Activated T-helper 2 cell treated with anti-CD3 and anti-CD28 coated beads, Interferon-gamma antibody, Interleukin-2, Interleukin-4, amounts not matched to agents 10 μg/mL and 5 μg/mL and 100 μg/mL, durations not matched to agents 14 hours and 24 hours and 36 hours (primary cell): ENCODE measurements at regions of chr5 and their contacts with region 1.

Region 1: DNA sequence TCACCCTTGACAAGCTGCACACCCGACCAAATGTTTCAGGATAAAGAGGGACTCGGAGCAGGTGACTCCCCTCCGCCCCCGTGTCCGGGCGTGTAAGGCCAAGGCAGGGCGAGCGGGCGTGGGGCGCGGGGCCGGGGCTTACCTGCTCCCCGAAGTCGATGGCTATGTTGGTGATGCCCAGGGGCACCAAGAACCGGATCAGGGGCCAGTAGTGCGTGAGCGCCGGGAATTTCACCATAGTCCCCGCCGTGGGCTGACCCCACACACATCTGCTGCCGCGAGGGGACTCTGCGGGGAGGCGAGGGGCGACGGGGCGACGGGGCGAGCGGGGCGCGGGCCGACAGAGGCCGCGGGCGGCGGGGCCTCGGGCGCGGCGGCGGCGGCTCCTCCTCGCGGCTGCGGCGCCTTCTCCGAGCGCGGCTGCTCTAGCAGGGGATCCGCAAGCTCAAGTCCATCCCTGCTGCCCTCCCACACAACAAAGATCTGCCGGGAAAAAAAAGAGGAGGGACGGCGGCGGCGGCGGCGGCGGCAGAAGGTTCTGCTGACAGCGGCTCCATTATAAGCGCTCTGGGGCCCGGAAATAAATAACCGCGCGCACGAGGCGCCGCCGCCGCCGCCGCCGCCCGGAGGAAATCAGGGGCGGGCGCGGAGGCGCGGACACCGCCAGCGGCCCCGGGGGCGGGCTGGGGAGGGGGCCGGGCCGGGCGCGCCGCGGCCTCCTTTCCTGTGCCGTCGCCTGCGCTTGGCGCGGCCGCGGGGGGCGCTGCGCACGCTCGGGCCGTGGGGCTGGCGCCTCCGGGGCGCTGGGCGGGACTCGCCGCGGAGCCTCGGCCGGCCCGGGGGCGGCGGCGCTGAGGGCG is at the start of gene ANKH:
- DNase-seq: peak; percentile 79
- H3K4me3 Mint-ChIP-seq: peak within 1 kb of the TSS; percentile 98
- H3K27ac Mint-ChIP-seq: peak within 1 kb of the TSS; percentile 89
- H3K4me1 Mint-ChIP-seq: peaks cover 29% of the 10 kb centered on the region
- H3K27me3 Mint-ChIP-seq: peaks cover 9% of the 10 kb centered on the region
- total RNA-seq, gene ANKH: 45.0 and 45.4 TPM in 2 replicates

Region 2: GRCh38 chr5:14364576-14365472 is 506.6 kb before region 1 on chr5:
- intact Hi-C with region 1: loop called (anchors 10 kb)
- DNase-seq: no peak
- H3K4me3 Mint-ChIP-seq: no peak overlapping the region
- H3K27ac Mint-ChIP-seq: no peak overlapping the region
- H3K4me1 Mint-ChIP-seq: peaks cover 48% of the 10 kb centered on the region
- H3K27me3 Mint-ChIP-seq: peaks cover 2% of the 10 kb centered on the region

Region 3: GRCh38 chr5:14664302-14665100 is 206.9 kb before region 1 on chr5 and contains the start of gene OTULIN:
- intact Hi-C with region 1: loop called (anchors 2 kb)
- DNase-seq: peak; percentile 85
- H3K4me3 Mint-ChIP-seq: peak within 1 kb of the TSS; percentile 96
- H3K27ac Mint-ChIP-seq: peak within 1 kb of the TSS; percentile 98
- H3K4me1 Mint-ChIP-seq: peaks cover 54% of the 10 kb centered on the region
- H3K27me3 Mint-ChIP-seq: no peaks in the 10 kb centered on the region
- total RNA-seq, gene OTULIN: 59.4 and 62.1 TPM in 2 replicates

Region 4: DNA sequence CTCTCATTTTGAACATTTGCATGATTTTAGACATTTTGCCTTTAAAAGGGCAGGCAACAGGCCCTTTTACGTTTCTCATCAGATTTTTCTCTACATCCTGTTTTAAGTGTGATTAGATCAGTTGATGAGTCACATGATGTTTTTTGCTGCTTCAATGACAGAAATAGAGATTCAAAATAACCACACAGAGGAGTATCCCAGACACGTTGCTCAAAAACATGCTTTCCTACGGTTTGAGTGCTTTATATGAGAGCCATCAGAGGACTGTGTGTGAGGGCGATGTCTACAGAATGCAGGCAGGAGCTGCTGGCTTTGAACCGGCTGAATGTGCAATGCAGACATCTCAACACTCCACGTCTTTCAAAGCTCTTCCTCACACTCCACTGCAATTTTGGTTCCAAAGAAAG is 164.8 kb before region 1 on chr5:
- intact Hi-C with region 1: loop called (anchors 5 kb)
- DNase-seq: peak; percentile 46
- H3K4me3 Mint-ChIP-seq: peak overlapping the region; percentile 79
- H3K27ac Mint-ChIP-seq: peak overlapping the region; percentile 99
- H3K4me1 Mint-ChIP-seq: peaks cover 76% of the 10 kb centered on the region
- H3K27me3 Mint-ChIP-seq: no peaks in the 10 kb centered on the region

Region 5: DNA sequence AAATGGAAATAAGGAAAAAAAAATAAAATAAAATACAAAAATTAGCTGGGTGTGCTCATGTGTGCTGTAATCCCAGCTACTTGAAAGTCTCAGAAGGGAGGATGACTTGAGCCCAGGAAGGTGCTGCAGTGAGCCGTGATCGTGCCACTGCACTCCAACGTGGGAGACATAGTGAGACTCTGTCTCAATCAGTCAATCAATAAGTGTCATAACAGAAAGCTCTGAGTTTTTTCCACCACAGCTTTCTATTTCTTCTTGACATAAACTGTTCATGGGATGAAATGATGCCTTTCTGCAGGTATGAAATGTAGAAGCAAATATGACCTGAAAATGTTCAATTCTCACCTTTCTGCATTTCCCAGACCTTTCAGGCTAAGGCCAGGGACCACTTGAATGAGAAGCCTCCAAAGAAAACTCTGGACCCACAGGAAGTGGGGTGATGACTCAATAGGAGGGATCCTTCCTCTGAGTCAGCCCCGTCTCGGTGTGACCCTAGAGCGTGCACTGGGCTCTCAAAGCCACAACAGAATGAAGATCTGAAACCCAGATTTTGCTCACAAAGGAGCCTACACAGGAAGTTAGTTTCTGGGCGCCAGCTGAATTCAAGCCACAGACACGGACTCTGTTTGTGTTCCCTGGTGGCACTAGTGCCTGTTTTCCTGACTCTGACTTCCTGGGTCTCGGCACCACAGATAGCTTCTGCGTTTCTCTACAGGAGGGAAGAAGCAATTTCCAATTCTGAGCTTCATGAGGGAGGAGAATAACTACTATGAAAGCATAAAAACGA is 61.9 kb before region 1 on chr5:
- intact Hi-C with region 1: loop called (anchors 1 kb)
- DNase-seq: peak; percentile 77
- H3K4me3 Mint-ChIP-seq: peak overlapping the region; percentile 76
- H3K27ac Mint-ChIP-seq: peak overlapping the region; percentile 94
- H3K4me1 Mint-ChIP-seq: peaks cover 44% of the 10 kb centered on the region
- H3K27me3 Mint-ChIP-seq: no peaks in the 10 kb centered on the region

Region 6: DNA sequence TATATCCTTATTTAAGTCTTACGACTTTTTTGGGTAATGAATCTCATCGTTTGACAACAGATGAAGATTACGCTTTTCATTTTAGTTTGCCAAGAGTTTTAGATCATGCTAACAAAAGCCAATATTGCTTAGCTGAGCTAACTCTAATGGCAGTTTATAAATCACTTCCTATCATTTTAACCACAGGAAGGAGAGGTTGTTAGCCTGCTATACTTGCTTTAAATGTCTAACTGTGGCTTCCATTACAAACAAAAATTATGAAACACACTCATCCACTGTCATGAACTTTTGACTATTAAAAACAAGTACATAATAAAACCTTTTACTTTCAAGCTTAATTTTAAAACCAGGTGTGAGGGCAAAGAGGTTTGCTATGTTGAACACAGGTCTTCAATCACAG is 53.9 kb after region 1 on chr5:
- intact Hi-C with region 1: loop called (anchors 2 kb)
- DNase-seq: no peak
- H3K4me3 Mint-ChIP-seq: peak overlapping the region; percentile 45
- H3K27ac Mint-ChIP-seq: peak overlapping the region; percentile 87
- H3K4me1 Mint-ChIP-seq: peaks cover 50% of the 10 kb centered on the region
- H3K27me3 Mint-ChIP-seq: no peaks in the 10 kb centered on the region

Region 7: GRCh38 chr5:15003511-15003920 is 132.1 kb after region 1 on chr5:
- intact Hi-C with region 1: loop called (anchors 2 kb)
- DNase-seq: peak; percentile 30
- H3K4me3 Mint-ChIP-seq: no peak overlapping the region
- H3K27ac Mint-ChIP-seq: no peak overlapping the region
- H3K4me1 Mint-ChIP-seq: peaks cover 18% of the 10 kb centered on the region
- H3K27me3 Mint-ChIP-seq: peaks cover 35% of the 10 kb centered on the region